Activated T-helper 2 cell treated with anti-CD3 and anti-CD28 coated beads, Interferon-gamma antibody, Interleukin-2, Interleukin-4, amounts not matched to agents 10 μg/mL and 5 μg/mL and 100 μg/mL, durations not matched to agents 14 hours and 24 hours and 36 hours (primary cell): ENCODE measurements at regions of chr1 and their contacts with region 1.

Region 1: GRCh38 chr1:235971571-235972310 is 93.1 kb downstream of the NID1 start:
- DNase-seq: peak; percentile 78
- H3K4me3 Mint-ChIP-seq: peak overlapping the region; percentile 48
- H3K27ac Mint-ChIP-seq: peak overlapping the region; percentile 79
- H3K4me1 Mint-ChIP-seq: peaks cover 23% of the 10 kb centered on the region
- H3K27me3 Mint-ChIP-seq: peaks cover 14% of the 10 kb centered on the region

Region 2: DNA sequence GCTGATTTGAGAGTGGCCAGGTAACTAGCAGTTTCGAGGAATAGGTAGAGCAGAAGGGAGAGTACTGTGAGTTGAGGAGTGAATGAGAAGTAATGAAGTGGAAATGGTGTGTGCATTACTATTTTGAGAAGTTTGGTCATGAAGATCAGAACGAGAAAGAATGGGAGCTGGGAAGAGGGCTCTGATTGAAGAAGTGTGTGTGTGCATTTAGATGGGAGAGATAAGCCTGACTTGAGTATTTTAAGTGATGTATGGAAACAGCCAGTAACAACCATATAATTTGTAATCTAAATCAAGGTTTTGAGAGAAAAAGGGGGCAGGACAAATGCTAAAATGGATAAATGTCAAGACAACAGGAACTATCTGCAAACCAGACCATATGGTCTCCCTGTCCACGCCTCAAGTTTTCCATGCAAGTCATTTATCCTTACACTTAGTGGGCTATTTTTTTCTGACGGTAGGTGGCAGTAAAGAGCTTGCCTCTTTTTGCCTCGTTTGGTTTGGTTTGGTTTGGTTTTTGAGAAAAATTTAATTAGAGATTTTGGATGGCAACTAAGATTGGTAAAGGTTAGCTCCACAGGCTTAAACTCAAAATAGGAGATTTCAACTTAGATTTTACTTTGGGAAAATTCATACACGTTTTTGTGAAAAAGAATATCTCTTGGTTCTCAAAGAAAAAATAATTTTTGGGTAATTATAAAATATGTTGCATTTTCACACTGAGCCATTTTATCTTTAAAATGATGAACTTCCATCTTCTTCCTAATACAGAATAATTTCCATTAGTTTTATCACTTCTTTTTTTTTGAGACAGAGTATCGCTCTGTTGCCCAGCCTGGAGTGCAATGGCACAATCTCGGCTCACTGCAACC is 458.0 kb before region 1 on chr1:
- intact Hi-C with region 1: loop called (anchors 1 kb)
- DNase-seq: no peak
- H3K4me3 Mint-ChIP-seq: no peak overlapping the region
- H3K27ac Mint-ChIP-seq: no peak overlapping the region
- H3K4me1 Mint-ChIP-seq: peaks cover 9% of the 10 kb centered on the region
- H3K27me3 Mint-ChIP-seq: peaks cover 16% of the 10 kb centered on the region

Region 3: GRCh38 chr1:235642011-235642942 is 329.5 kb before region 1 on chr1:
- intact Hi-C with region 1: loop called (anchors 5 kb)
- DNase-seq: peak; percentile 75
- H3K4me3 Mint-ChIP-seq: peak overlapping the region; percentile 65
- H3K27ac Mint-ChIP-seq: peak overlapping the region; percentile 95
- H3K4me1 Mint-ChIP-seq: peaks cover 73% of the 10 kb centered on the region
- H3K27me3 Mint-ChIP-seq: peaks cover 11% of the 10 kb centered on the region

Region 4: DNA sequence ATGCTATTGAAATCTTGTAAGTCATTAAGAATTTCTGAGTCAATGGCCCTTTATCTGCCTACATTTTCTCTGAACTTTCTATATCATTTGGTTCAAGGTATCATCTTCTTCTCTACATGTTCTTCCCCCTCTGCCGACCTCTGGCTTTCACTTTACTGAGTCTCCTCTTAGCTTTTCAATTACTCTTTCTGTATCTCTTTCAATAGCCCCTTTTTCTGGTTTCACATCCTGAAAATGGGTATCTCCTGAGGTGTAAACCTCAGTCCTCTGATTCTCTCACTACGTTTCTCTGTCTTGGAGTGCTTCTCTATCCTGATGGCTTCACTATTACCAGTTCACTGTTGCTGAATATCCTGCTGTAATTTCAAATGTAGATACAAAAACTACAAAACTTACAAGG is 203.9 kb before region 1 on chr1:
- intact Hi-C with region 1: loop called (anchors 1 kb)
- DNase-seq: no peak
- H3K4me3 Mint-ChIP-seq: no peak overlapping the region
- H3K27ac Mint-ChIP-seq: no peak overlapping the region
- H3K4me1 Mint-ChIP-seq: peaks cover 8% of the 10 kb centered on the region
- H3K27me3 Mint-ChIP-seq: no peaks in the 10 kb centered on the region

Region 5: DNA sequence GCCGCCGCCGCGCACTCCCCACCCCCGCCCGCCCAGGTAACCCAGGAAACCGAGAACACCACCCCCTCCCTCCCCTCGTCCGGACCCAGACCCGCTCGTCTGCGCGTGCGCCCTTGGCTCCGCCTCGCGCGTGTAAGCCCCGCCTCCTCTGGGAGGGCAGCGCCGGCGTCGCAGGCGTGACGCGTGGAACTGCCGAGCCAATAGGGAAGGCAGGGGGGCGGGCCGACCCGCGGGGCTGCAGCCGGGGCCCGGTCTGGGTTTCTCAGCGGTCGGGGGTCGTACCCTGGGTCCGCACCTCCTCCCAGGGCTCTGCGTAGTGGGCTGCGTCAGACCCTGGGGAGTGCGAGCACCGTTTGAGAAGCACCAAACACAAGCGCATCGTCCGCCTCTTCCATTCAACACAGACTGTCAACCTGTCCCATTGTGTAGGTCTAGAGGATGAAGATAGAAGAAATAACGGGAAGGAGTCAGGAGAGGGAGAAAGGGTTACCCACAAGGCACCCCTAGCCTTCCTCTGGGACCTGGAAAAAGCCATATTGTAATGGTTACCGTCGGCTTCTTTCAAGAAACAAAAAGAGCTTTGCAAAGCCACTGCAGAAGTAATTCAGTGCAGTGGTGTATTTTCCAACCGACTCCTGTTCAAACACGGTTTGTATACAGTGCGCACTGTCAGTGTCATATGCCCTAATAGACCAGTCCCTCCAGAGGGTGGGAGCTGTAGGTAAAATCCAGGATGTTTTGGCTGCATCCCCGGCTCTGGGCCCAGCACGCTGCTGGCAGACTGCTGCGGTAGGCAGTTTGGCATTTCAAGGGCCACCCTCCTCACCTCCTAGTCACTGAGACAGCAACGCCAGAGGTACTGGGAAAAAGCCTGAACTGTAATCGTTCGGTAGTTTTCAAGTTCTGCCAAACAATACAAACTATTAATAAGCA is 104.6 kb before region 1 on chr1:
- intact Hi-C with region 1: loop called (anchors 1 kb)
- DNase-seq: peak; percentile 97
- H3K4me3 Mint-ChIP-seq: peak overlapping the region; percentile 98
- H3K27ac Mint-ChIP-seq: peak overlapping the region; percentile 99
- H3K4me1 Mint-ChIP-seq: peaks cover 52% of the 10 kb centered on the region
- H3K27me3 Mint-ChIP-seq: no peaks in the 10 kb centered on the region

Region 6: GRCh38 chr1:235883261-235883927 is 88.3 kb before region 1 on chr1:
- intact Hi-C with region 1: loop called (anchors 5 kb)
- DNase-seq: no peak
- H3K4me3 Mint-ChIP-seq: peak overlapping the region; percentile 63
- H3K27ac Mint-ChIP-seq: peak overlapping the region; percentile 67
- H3K4me1 Mint-ChIP-seq: peaks cover 46% of the 10 kb centered on the region
- H3K27me3 Mint-ChIP-seq: no peaks in the 10 kb centered on the region

Region 7: GRCh38 chr1:235954306-235955283 is 17.1 kb before region 1 on chr1:
- intact Hi-C with region 1: loop called (anchors 1 kb)
- DNase-seq: peak; percentile 15
- H3K4me3 Mint-ChIP-seq: no peak overlapping the region
- H3K27ac Mint-ChIP-seq: no peak overlapping the region
- H3K4me1 Mint-ChIP-seq: peaks cover 33% of the 10 kb centered on the region
- H3K27me3 Mint-ChIP-seq: no peaks in the 10 kb centered on the region